SK-N-SH (cell line): ENCODE measurements at regions of chr17 and their contacts with region 1.

Region 1: GRCh38 chr17:64479650-64480049 is 17.2 kb downstream of the POLG2 start:
- DNase-seq: no peak
- H3K4me3 ChIP-seq: no peak overlapping the region
- H3K27ac ChIP-seq: no peak overlapping the region
- H3K4me1 ChIP-seq: no peaks in the 10 kb centered on the region
- H3K27me3 ChIP-seq: no peaks in the 10 kb centered on the region
- CTCF ChIP-seq: no peak
- EP300 ChIP-seq: no peak
- RAD21 ChIP-seq: no peak

Region 2: GRCh38 chr17:64174686-64175456 is 304.8 kb before region 1 on chr17:
- CTCF ChIA-PET with region 1: no interaction called
- POLR2A ChIA-PET with region 1: no interaction called
- DNase-seq: no peak
- H3K4me3 ChIP-seq: no peak overlapping the region
- H3K27ac ChIP-seq: peak overlapping the region in 1 of 2 experiments; percentile 41; a peak in 1 of 4 replicates
- H3K4me1 ChIP-seq: peaks cover 16 to 42% of the 10 kb centered on the region in 2 experiments; a peak in 3 of 4 replicates
- H3K27me3 ChIP-seq: no peaks in the 10 kb centered on the region
- CTCF ChIP-seq: no peak
- EP300 ChIP-seq: no peak
- RAD21 ChIP-seq: no peak

Region 3: DNA sequence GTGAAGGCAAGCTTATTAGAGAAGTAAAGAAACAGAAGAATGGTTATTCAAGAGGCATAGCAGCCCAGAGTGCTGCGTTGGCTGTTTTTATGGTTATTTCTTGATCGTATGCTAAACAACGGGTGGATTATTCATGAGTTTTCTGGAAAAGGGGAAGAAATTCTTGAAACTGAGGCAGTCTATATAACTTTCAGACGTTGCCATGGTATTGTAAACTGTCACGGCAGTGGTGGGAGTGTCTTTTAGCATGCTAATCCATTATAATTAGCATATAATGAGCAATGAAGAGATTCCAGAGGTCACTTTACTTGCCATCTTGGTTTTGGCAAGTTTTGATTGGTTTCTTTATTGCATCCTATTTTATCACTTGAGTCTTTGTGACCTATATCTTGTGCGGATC is 48.1 kb before region 1 on chr17:
- CTCF ChIA-PET with region 1: no interaction called
- POLR2A ChIA-PET with region 1: no interaction called
- DNase-seq: no peak
- H3K4me3 ChIP-seq: no peak overlapping the region
- H3K27ac ChIP-seq: no peak overlapping the region
- H3K4me1 ChIP-seq: no peaks in the 10 kb centered on the region
- H3K27me3 ChIP-seq: no peaks in the 10 kb centered on the region
- CTCF ChIP-seq: no peak
- EP300 ChIP-seq: no peak
- RAD21 ChIP-seq: no peak

Region 4: GRCh38 chr17:64491034-64491859 is 11.6 kb after region 1 on chr17:
- CTCF ChIA-PET with region 1: interaction called, 76 read pairs
- POLR2A ChIA-PET with region 1: interaction called, 10 read pairs
- DNase-seq: no peak
- H3K4me3 ChIP-seq: no peak overlapping the region
- H3K27ac ChIP-seq: no peak overlapping the region; a peak in 1 of 4 replicates
- H3K4me1 ChIP-seq: peaks cover 4 to 9% of the 10 kb centered on the region in 2 experiments; a peak in 3 of 4 replicates
- H3K27me3 ChIP-seq: no peaks in the 10 kb centered on the region
- CTCF ChIP-seq: peak; percentile 92
- EP300 ChIP-seq: no peak
- RAD21 ChIP-seq: peak; percentile 61

Region 5: GRCh38 chr17:64572638-64573154 is 93.0 kb after region 1 on chr17:
- CTCF ChIA-PET with region 1: no interaction called
- POLR2A ChIA-PET with region 1: no interaction called
- DNase-seq: no peak
- H3K4me3 ChIP-seq: no peak overlapping the region
- H3K27ac ChIP-seq: peak overlapping the region in 1 of 2 experiments; percentile 71; a peak in 2 of 4 replicates
- H3K4me1 ChIP-seq: peaks cover 4 to 29% of the 10 kb centered on the region in 2 experiments
- H3K27me3 ChIP-seq: no peaks in the 10 kb centered on the region
- CTCF ChIP-seq: no peak
- EP300 ChIP-seq: no peak
- RAD21 ChIP-seq: no peak